A549 (cell line): ENCODE measurements at regions of chr15 and their contacts with region 1.

Region 1: DNA sequence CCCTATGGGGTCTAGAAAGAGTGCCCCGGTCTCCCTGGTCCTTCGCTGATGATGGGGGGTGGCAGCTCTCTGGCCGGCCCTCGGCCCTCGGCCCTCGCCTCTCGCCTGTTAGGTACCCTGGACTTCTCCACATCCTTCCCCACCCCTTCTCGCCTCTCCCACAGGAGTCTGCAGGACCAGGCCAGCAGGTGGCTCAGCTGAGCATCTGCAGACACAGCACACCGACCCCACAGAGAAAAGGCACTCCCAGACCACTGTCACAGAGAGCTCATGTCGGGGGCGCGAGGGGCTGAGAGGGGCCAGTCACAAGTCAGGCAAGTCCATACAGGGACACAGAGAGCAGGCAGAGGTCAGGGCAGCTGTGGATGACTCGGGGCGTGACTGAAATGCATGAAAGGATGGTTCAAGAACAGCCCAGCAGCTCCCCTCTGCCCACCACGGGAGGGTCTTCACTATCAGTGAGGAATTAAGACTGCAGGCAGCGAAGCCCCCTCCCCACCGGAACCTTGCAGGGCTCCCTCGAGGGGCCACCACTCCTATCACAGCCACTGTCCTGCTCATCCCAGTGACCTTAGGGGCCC is 181.7 kb upstream of the NSMCE3 start:
- DNase-seq: peak; percentile 43 to 44
- ATAC-seq: peak; percentile 92 to 97
- H3K4me3 ChIP-seq: no peak overlapping the region
- H3K27ac ChIP-seq: no peak overlapping the region
- H3K4me1 ChIP-seq: no peaks in the 10 kb centered on the region
- CTCF ChIP-seq: peak; percentile 45
- EP300 ChIP-seq: no peak
- POLR2A ChIP-seq: no peak
- RAD21 ChIP-seq: peak; percentile 52 to 62

Region 2: DNA sequence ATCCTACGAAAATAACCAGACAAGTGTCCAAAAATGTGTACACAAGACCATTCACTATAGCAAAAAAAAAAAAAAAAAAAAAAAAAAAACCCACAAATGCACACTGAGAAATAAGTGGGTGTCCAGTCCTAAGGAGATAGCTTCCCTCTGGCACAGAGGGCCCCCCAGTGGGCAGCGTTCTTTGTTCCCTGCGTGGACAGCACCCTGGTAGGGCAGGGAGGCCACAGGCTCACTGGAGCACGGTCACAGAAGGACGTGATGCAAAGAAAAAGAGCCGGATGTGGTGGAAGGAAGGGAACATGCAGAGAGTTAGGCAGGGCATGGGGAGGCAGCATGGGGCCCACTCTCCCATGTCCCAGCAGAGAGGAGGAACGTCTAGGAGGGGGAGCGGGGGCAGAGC is 29.0 kb after region 1 on chr15:
- CTCF ChIA-PET with region 1: no interaction called
- POLR2A ChIA-PET with region 1: no interaction called
- DNase-seq: no peak
- ATAC-seq: no peak
- H3K4me3 ChIP-seq: no peak overlapping the region
- H3K27ac ChIP-seq: no peak overlapping the region
- H3K4me1 ChIP-seq: no peaks in the 10 kb centered on the region
- CTCF ChIP-seq: no peak
- EP300 ChIP-seq: no peak
- POLR2A ChIP-seq: no peak
- RAD21 ChIP-seq: no peak

Region 3: DNA sequence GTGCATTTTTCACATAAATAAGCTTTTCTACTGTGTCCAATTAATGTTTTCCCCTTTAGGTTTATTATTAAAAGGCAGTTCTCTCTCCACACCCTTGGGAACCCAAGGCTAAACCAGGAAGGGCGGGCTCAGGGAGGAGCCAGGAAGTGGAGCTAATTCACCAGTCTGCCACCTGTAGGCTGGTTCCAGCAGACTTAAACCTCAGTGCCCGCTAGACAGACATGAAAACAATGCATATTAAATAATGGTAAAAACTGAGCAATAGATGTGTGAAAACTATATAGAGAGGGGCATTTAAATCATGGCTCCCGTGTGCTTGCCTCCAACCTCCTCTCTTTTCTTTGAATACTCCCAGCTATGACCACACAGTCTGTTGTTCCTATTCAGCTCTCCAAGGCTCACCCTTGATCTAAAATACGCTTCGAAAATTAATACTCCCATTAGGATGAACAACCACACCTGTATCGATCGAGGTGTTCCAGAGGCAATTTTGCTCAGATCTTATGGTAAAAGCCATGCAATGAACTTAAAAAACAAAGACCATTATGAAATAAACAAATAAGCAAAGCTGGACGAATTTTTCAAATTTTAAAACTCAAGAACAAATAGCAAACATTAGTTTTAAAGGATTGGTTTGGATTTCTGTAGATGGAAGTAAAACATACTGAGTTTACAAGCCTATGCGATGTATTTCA is 117.7 kb after region 1 on chr15:
- CTCF ChIA-PET with region 1: interaction called, 10 read pairs
- POLR2A ChIA-PET with region 1: no interaction called
- DNase-seq: peak; percentile 81 to 88
- ATAC-seq: peak; percentile 86 to 94
- H3K4me3 ChIP-seq: no peak overlapping the region
- H3K27ac ChIP-seq: no peak overlapping the region
- H3K4me1 ChIP-seq: peaks cover 10% of the 10 kb centered on the region; the same call in 2 of the 3 replicates
- CTCF ChIP-seq: peak; percentile 54
- EP300 ChIP-seq: no peak
- POLR2A ChIP-seq: no peak
- RAD21 ChIP-seq: peak; percentile 40 to 41; a peak in 3 of 5 replicates